Activated CD4-positive, alpha-beta T cell treated with anti-CD3 and anti-CD28 coated beads, Interleukin-2, amount 10 ng/mL, durations not matched to agents 24 days and 14 days (primary cell): ENCODE measurements at regions of chr6 and their contacts with region 1.

Region 1: DNA sequence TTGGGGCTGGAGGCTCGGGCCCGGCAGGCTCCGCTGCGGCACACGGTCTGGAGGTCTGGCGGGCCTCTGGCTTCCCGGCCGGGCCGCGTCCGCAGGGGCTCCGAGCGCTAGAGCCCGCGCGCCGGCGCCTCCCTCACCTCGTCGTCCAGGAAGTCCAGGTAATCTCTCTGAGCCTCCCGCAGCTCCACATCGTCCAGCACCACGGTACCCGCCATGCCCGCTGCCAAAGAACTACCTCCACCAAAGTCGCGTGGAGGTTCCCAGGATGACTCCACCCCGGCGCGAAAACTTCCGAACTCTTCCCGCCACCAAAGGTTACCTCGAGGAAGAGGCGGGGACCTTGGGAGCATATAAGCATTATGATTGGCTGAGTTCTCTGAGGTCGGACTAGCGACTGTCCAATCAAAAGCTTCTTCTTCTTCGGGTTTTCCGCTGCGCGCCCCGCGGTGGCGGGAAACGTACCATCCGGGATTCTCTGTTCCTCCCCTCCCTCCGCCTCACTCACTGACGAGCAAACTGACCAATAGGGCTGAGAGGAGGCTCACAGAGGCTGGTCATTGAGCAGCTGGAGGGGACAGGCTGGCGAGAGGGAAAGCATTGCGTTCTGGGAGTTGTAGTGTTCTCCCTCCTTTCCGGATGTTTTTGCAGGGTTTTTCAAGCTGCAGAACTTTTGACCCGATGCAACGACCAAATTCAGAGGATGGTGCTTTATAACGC is at the start of gene MCM3:
- DNase-seq: peak; percentile 99
- H3K4me3 Mint-ChIP-seq: peak within 1 kb of the TSS; percentile 85
- H3K27ac Mint-ChIP-seq: peak within 1 kb of the TSS; percentile 38
- H3K4me1 Mint-ChIP-seq: peaks cover 37% of the 10 kb centered on the region
- H3K27me3 Mint-ChIP-seq: no peaks in the 10 kb centered on the region
- total RNA-seq, gene MCM3: 239 and 240 TPM in 2 replicates

Region 2: GRCh38 chr6:52155791-52156576 is 128.6 kb before region 1 on chr6:
- intact Hi-C with region 1: loop called (anchors 1 kb)
- DNase-seq: no peak
- H3K4me3 Mint-ChIP-seq: no peak overlapping the region
- H3K27ac Mint-ChIP-seq: peak overlapping the region; percentile 8
- H3K4me1 Mint-ChIP-seq: peaks cover 21% of the 10 kb centered on the region
- H3K27me3 Mint-ChIP-seq: peaks cover 15% of the 10 kb centered on the region

Region 3: GRCh38 chr6:52304983-52305390 is 20.4 kb after region 1 on chr6:
- intact Hi-C with region 1: loop called (anchors 1 kb)
- DNase-seq: no peak
- H3K4me3 Mint-ChIP-seq: peak overlapping the region; percentile 63
- H3K27ac Mint-ChIP-seq: peak overlapping the region; percentile 86
- H3K4me1 Mint-ChIP-seq: peaks cover 54% of the 10 kb centered on the region
- H3K27me3 Mint-ChIP-seq: no peaks in the 10 kb centered on the region

Region 4: DNA sequence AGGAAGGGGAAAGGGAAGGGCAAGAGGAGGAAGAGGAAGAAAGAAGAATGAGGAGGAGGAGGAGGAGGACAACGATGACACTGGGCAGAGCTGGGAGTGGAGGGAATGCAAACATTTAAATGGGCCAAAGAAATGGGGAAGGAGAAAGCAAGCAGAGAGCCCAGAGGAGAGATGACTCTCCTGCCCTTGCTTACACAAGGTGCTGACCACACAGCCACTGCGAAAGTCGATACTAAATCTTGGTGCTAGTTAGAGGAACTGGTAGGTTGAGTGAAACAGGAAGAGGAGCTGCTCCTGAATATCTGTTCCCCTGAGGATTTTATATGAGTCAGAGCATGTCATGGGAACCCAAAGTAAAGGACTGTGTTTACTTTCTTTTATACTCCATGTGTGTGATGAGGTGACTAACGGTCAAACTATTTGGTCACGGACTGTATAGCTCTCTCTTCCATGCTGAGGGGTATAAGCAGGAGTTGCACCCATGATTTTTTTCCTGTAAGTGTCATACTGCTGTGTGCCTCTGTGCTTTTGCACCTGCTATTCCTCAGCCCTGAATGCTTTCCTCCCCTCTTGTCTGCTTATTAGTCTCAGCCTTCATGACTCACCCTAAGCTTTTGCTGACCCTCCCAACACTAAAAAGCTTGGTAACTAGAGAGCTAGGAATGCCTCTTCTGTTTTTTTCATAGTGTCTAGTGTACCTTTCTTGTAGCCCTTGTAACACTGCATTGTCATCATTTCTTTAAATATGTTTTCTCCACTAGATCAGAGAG is 67.8 kb after region 1 on chr6:
- intact Hi-C with region 1: no loop called
- DNase-seq: no peak
- H3K4me3 Mint-ChIP-seq: no peak overlapping the region
- H3K27ac Mint-ChIP-seq: no peak overlapping the region
- H3K4me1 Mint-ChIP-seq: peaks cover 13% of the 10 kb centered on the region
- H3K27me3 Mint-ChIP-seq: peaks cover 3% of the 10 kb centered on the region

Region 5: GRCh38 chr6:52399511-52400312 is 115.1 kb after region 1 on chr6:
- intact Hi-C with region 1: loop called (anchors 1 kb)
- DNase-seq: peak; percentile 83
- H3K4me3 Mint-ChIP-seq: no peak overlapping the region
- H3K27ac Mint-ChIP-seq: no peak overlapping the region
- H3K4me1 Mint-ChIP-seq: peaks cover 45% of the 10 kb centered on the region
- H3K27me3 Mint-ChIP-seq: no peaks in the 10 kb centered on the region

Region 6: DNA sequence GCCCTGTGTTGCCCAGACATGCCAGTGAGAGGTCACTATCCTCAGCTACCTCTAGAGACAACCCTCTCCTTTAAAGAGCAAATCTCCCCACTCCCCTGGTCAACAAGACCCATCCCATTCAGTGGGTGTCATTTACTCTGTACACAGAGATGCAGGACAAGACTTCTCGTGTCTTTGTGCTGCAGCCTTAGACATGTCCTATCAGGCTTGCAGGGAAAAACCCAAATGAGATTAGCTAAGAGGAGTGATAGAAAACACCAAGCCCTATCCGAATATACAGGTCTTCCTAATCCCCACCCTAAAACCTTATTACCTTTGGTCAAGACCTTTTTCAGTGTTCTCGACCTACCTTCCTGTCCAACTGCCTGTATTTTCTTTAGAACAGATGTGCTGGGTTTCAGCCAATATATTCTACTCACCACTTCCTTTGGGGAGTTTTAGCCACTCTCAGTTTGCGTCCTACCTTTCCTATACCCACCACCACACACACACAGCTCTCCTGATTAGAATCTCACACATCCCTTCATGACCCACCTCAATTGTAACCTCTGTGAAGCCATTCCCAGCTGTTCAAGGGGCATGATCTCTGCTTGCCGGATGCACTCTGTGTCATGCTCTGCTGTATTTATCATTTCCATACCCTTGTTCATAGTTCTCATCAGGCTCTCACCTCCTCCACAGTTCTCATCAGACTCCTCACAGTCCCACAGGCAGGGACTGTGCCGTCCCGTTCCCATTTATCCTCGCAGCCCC is 252.6 kb after region 1 on chr6:
- intact Hi-C with region 1: loop called (anchors 10 kb)
- DNase-seq: peak; percentile 63
- H3K4me3 Mint-ChIP-seq: peak overlapping the region; percentile 7
- H3K27ac Mint-ChIP-seq: peak overlapping the region; percentile 36
- H3K4me1 Mint-ChIP-seq: peaks cover 34% of the 10 kb centered on the region
- H3K27me3 Mint-ChIP-seq: no peaks in the 10 kb centered on the region

Region 7: GRCh38 chr6:52664186-52664990 is 379.8 kb after region 1 on chr6:
- intact Hi-C with region 1: loop called (anchors 1 kb)
- DNase-seq: peak; percentile 93
- H3K4me3 Mint-ChIP-seq: no peak overlapping the region
- H3K27ac Mint-ChIP-seq: no peak overlapping the region
- H3K4me1 Mint-ChIP-seq: peaks cover 4% of the 10 kb centered on the region
- H3K27me3 Mint-ChIP-seq: no peaks in the 10 kb centered on the region

Region 8: DNA sequence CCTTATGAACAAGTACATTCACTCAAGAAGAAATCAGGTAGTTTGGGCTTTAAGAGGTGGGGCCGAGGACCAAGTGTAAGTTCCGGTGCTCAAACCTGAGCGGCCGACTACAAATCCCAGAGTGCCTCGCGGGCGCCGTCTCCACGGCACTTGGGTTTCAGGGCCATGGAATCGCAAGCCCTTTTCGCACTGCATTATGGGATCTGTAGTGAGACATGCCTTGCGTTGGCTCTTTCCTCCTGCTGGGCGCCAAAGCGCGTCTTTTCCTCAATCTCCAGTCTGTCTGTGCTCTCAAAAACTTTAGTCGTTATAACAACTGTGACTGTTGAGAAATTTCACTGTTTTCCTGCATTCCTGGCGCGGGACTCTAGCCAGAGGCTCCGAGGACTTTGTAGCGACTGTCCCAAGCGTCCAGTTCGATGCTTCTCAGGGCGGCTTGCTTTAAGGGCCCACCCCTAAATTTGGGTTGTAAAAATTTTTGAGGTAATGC is 780.2 kb after region 1 on chr6:
- intact Hi-C with region 1: loop called (anchors 2 kb)
- DNase-seq: peak; percentile 98
- H3K4me3 Mint-ChIP-seq: peak overlapping the region; percentile 100
- H3K27ac Mint-ChIP-seq: peak overlapping the region; percentile 100
- H3K4me1 Mint-ChIP-seq: peaks cover 46% of the 10 kb centered on the region
- H3K27me3 Mint-ChIP-seq: no peaks in the 10 kb centered on the region